SK-N-SH (cell line): ENCODE measurements at regions of chr20 and their contacts with region 1.

Region 1: GRCh38 chr20:23350196-23350903 is at the start of gene NXT1:
- DNase-seq: peak; percentile 92
- H3K4me3 ChIP-seq: peak within 1 kb of the TSS; percentile 93 to 99
- H3K27ac ChIP-seq: peak within 1 kb of the TSS; percentile 98 to 99
- H3K4me1 ChIP-seq: peaks cover 5 to 11% of the 10 kb centered on the region in 2 experiments; a peak in 3 of 4 replicates
- H3K27me3 ChIP-seq: no peaks in the 10 kb centered on the region
- CTCF ChIP-seq: no peak
- EP300 ChIP-seq: no peak
- RAD21 ChIP-seq: no peak
- polyA plus RNA-seq, gene NXT1: 28.2 TPM in 2 replicates

Region 2: DNA sequence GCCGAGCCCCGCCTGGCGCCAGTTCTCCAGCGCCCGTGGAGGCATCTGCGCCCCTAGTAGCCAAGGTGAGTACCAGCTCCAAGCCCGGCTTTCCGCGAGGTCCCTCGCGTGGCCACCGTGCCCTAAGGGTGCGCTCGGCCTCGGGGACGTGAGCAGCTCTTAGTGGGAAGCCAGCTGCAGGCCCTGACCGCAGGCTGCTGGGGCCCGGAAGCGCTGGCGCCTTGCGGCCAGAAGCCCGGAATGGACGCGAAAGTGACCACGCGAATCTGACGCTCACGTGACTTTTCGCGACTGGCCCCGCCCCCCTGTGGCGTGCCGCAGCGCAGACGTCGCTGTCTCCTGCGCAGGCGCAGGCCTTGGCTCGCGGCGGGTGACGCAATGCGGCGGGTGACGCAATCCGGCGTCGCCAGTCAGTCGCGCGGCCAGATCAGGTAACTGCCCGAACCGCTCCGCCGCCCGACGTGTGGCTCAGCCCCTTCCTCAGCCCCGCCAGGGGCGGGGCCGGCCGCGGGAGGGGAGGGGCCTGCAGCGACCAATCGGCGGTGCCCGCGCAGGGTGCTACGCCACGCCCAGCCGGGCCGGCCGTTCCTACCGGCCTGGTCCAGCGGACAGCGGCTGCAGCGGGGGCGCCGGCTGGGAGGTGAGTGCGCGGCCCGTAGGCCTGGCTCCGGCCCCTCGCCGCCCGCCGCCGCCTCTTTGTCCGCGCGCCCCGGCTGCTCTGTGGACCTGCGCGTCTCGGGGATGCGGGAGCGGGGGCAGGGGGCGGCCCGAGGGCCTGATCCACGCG is 11.4 kb after region 1 on chr20 and contains the start of gene GZF1:
- CTCF ChIA-PET with region 1: interaction called, 8 read pairs
- POLR2A ChIA-PET with region 1: interaction called, 11 read pairs
- DNase-seq: peak; percentile 98
- H3K4me3 ChIP-seq: peak within 1 kb of the TSS; percentile 81 to 87
- H3K27ac ChIP-seq: peak within 1 kb of the TSS; percentile 95 to 96
- H3K4me1 ChIP-seq: peaks cover 13 to 25% of the 10 kb centered on the region in 2 experiments; a peak in 3 of 4 replicates
- H3K27me3 ChIP-seq: no peaks in the 10 kb centered on the region
- CTCF ChIP-seq: no peak
- EP300 ChIP-seq: peak in 1 of 2 experiments; percentile 4; a peak in 1 of 4 replicates
- RAD21 ChIP-seq: no peak
- polyA plus RNA-seq, gene GZF1: 15.0 and 20.6 TPM in 2 replicates

Region 3: GRCh38 chr20:23420943-23421931 is 70.9 kb after region 1 on chr20 and contains the start of gene NAPB:
- CTCF ChIA-PET with region 1: interaction called, 3 read pairs
- POLR2A ChIA-PET with region 1: interaction called, 11 read pairs
- DNase-seq: peak; percentile 97
- H3K4me3 ChIP-seq: peak within 1 kb of the TSS; percentile 77 to 95
- H3K27ac ChIP-seq: peak within 1 kb of the TSS; percentile 65 to 80; a peak in 3 of 4 replicates
- H3K4me1 ChIP-seq: peaks cover 3 to 5% of the 10 kb centered on the region in 2 experiments; a peak in 3 of 4 replicates
- H3K27me3 ChIP-seq: no peaks in the 10 kb centered on the region
- CTCF ChIP-seq: peak; percentile 34
- EP300 ChIP-seq: no peak
- RAD21 ChIP-seq: no peak
- polyA plus RNA-seq, gene NAPB: 3.0 and 5.9 TPM in 2 replicates